Esophagus muscularis mucosa (tissue), 4 donors: ENCODE measurements at regions of chr1 and their contacts with region 1.

Region 1: GRCh38 chr1:111990878-111991718 is 1.6 kb upstream of the KCND3 start:
- DNase-seq: no peak
- H3K4me3 ChIP-seq: peak overlapping the region; percentile 70 to 88 (median 78)
- H3K27ac ChIP-seq: peak overlapping the region; percentile 83 to 89 (median 88)
- H3K4me1 ChIP-seq: peaks cover 30 to 62% (median 52%) of the 10 kb centered on the region in 4 donors
- H3K27me3 ChIP-seq: peaks cover 0 to 5% (median 0%) of the 10 kb centered on the region in 4 donors
- CTCF ChIP-seq: peak; percentile 47 to 56 (median 55)
- EP300 ChIP-seq: peak; percentile 35
- POLR2A ChIP-seq: no peak

Region 2: GRCh38 chr1:111789666-111790316 is 201.3 kb before region 1 on chr1:
- intact Hi-C with region 1: loop called (anchors 5 kb)
- DNase-seq: no peak
- H3K4me3 ChIP-seq: no peak overlapping the region
- H3K27ac ChIP-seq: peak overlapping the region in 1 of 4 donors; percentile 28
- H3K4me1 ChIP-seq: peaks cover 0 to 14% (median 7%) of the 10 kb centered on the region in 4 donors
- H3K27me3 ChIP-seq: no peaks in the 10 kb centered on the region
- CTCF ChIP-seq: peak; percentile 31 to 42 (median 34)
- EP300 ChIP-seq: no peak
- POLR2A ChIP-seq: no peak

Region 3: DNA sequence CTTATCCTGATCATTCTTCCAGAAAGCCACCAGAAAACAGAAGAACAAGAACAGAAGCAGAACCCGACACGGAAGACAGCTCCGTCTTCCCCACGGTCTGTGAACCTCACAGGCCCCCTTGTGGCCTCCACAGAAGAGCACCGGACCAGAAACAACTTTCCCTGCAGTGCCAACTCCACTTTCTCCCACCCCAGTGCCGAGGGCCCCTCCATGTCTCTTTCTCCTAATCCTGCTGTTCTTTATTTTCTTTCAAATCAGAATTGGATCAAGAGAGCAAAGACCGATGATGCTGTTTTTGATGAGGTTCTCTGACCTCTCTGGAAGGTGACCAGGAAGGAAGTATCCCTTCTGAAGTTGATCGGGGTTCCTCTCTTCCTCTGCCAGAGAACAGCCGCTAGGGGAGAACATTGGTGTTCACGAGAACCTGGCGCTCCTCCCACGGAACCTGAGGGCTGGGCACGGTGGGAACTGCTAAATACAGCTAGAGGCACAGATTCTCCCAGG is 346.0 kb after region 1 on chr1:
- intact Hi-C with region 1: loop called (anchors 10 kb)
- DNase-seq: no peak
- H3K4me3 ChIP-seq: peak overlapping the region in 1 of 4 donors; percentile 9
- H3K27ac ChIP-seq: no peak overlapping the region
- H3K4me1 ChIP-seq: peaks cover 0 to 18% (median 0%) of the 10 kb centered on the region in 4 donors
- H3K27me3 ChIP-seq: no peaks in the 10 kb centered on the region
- CTCF ChIP-seq: peak; percentile 66 to 76 (median 71)
- EP300 ChIP-seq: no peak
- POLR2A ChIP-seq: no peak